ENCODE measurements at regions of chr19 and their contacts with region 1.

Region 1: DNA sequence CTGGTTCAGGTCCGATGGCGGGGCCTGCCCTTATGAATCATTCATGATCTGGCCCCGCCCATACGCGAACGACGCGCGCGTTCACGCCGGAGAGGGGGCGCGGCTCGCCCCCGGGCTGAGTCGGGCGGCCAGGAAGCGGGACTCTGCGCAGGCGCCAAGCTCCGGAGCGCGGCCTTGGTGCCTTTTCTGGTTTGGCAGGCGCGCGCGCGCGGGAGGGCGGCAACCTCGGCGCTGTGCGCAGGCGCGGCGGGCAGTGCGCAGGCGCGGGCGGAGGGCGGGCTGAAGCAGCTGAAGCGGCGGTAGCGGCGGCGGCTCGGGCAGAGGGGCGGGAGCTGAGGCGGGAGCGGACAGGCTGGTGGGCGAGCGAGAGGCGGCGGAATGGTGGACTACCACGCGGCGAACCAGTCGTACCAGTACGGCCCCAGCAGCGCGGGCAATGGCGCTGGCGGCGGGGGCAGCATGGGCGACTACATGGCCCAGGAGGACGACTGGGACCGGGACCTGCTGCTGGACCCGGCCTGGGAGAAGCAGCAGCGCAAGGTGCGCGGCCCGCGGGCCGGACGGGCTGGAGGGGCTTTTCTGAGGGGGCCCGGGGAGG is at the start of gene ACTN4:
- DNase-seq: peak; percentile 97
- H3K4me3 Mint-ChIP-seq: peak within 1 kb of the TSS; percentile 84
- H3K27ac Mint-ChIP-seq: peak within 1 kb of the TSS; percentile 86
- H3K4me1 Mint-ChIP-seq: peaks cover 14% of the 10 kb centered on the region
- H3K27me3 Mint-ChIP-seq: no peaks in the 10 kb centered on the region
- CTCF ChIP-seq: no peak
- total RNA-seq, gene ACTN4: 300 and 320 TPM in 2 replicates

Region 2: DNA sequence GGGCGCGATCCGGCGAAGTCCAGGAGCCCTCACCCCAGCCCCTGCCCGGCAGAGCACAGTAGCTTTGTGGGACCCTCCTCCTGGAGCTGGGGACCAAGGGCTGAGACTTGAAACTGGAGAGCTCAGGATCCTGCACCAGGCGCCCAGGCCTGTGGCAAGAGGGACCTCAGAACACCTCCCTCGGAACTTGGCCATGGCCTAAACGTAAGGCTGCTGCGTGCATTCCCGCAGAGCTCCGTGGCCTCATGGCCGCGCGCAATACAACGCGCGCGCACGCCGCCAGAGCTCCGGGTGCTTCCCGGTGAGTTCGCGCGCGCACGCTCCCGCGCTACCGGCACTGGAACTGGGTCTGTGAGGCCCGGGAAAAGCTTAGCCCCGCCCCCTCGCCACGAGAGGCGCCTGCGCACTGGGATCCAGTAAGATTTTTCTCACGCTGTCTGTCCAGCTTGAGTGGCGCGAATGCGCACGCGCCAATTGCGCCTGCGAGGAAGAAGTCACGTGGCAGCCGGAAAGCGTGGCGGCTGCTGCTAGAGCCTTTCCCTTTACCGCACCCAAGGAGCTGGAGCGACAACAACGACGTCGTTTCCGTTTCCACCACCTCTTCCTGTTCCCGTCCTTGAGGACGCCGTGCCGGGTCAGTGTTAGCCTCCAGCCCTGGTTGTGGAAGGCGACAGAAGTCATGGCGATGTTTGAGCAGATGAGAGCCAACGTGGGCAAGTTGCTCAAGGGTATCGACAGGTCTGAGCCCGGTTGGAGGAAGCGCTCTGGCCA is 28.7 kb before region 1 on chr19 and contains the start of gene EIF3K:
- CTCF ChIA-PET with region 1: no interaction called
- POLR2A ChIA-PET with region 1: interaction called, 39 read pairs
- intact Hi-C with region 1: no loop called
- DNase-seq: peak; percentile 99
- H3K4me3 Mint-ChIP-seq: peak within 1 kb of the TSS; percentile 100
- H3K27ac Mint-ChIP-seq: peak within 1 kb of the TSS; percentile 99
- H3K4me1 Mint-ChIP-seq: peaks cover 8% of the 10 kb centered on the region
- H3K27me3 Mint-ChIP-seq: no peaks in the 10 kb centered on the region
- CTCF ChIP-seq: no peak
- total RNA-seq, gene EIF3K: 342 and 375 TPM in 2 replicates

Region 3: GRCh38 chr19:38666663-38667511 is 19.4 kb after region 1 on chr19:
- CTCF ChIA-PET with region 1: interaction called, 4 read pairs
- POLR2A ChIA-PET with region 1: interaction called, 185 read pairs
- intact Hi-C with region 1: no loop called
- DNase-seq: peak; percentile 51
- H3K4me3 Mint-ChIP-seq: no peak overlapping the region
- H3K27ac Mint-ChIP-seq: peak overlapping the region; percentile 87
- H3K4me1 Mint-ChIP-seq: peaks cover 53% of the 10 kb centered on the region
- H3K27me3 Mint-ChIP-seq: no peaks in the 10 kb centered on the region
- CTCF ChIP-seq: no peak

Region 4: DNA sequence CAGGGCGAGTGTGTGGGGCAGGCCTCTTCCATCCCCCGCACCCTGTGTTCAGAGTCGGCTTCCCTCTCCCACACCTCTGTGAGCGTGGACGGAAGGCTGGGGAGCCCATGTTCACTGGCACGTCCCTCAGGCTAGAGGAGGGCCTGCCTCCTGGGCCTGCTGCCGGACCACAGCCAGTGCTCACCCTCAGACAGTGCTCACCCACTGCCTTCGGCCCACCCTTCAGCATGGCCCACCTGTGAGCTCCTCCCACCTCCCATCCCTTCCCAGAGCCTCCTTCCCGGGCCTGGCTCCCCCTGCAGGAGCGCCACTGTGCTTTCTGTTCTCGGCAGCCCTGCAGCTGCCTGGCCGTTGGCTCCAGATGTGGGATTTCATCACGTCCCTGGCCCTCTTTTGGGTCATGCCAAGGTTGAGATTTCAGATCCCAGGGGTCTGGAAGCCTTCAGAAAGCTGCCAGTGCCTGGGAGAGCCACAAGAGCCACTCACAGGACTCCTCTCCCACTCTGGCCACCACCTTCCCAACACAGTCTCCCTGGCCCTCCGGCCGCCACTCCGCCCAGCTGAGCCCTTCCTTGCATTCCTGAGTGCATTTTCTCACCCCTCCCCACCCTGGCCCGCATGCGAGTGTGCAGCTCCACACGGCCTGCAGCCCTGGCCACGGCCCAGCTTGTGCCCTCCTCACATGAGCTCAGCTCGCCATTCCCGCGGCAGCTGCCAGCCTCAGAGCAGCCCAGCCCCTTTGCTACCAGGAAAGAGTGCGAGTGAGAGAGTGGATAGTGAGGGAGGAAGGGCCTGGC is 71.5 kb after region 1 on chr19:
- CTCF ChIA-PET with region 1: interaction called, 3 read pairs
- POLR2A ChIA-PET with region 1: interaction called, 38 read pairs
- intact Hi-C with region 1: loop called (anchors 2 kb)
- DNase-seq: no peak
- H3K4me3 Mint-ChIP-seq: peak overlapping the region; percentile 43
- H3K27ac Mint-ChIP-seq: peak overlapping the region; percentile 75
- H3K4me1 Mint-ChIP-seq: peaks cover 13% of the 10 kb centered on the region
- H3K27me3 Mint-ChIP-seq: no peaks in the 10 kb centered on the region
- CTCF ChIP-seq: peak; percentile 31

Region 5: DNA sequence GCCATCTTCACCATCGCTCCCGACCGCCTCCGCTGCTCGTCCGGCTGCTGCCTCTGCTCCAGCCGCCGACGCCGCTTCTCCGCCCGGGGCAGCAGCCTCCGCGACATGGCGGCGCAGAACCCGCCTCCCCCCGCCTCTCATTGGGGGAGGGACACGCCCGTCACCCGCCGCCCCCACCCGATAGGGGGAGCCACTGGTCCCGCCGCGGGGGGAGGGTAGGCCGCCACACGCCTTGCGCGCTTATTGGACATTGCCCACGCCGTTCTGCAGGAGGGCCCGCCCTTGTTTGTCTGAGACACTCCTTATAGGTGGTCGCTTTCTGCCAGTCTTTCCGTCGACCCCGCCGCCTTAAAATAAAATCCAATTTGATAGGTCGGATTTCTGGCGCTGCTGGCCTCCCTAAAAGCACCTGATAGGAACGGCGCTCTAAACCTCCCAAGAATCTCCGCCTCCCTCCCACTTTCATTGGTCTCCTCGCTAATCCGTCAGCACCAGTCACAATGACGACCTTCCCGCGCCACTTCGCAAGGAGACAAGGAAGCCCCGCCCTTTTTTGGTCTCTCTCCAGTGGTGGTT is 202.5 kb after region 1 on chr19 and contains the start of gene HNRNPL:
- CTCF ChIA-PET with region 1: no interaction called
- POLR2A ChIA-PET with region 1: interaction called, 32 read pairs
- intact Hi-C with region 1: loop called (anchors 5 kb)
- DNase-seq: peak; percentile 100
- H3K4me3 Mint-ChIP-seq: peak within 1 kb of the TSS; percentile 97
- H3K27ac Mint-ChIP-seq: peak within 1 kb of the TSS; percentile 99
- H3K4me1 Mint-ChIP-seq: peaks cover 18% of the 10 kb centered on the region
- H3K27me3 Mint-ChIP-seq: no peaks in the 10 kb centered on the region
- CTCF ChIP-seq: no peak
- total RNA-seq, gene HNRNPL: 288 and 421 TPM in 2 replicates